Naive thymus-derived CD8-positive, alpha-beta T cell (primary cell): ENCODE measurements at regions of chrX and their contacts with region 1.

Region 1: GRCh38 chrX:124217304-124218251 is 114.9 kb upstream of the TEX13D start:
- DNase-seq: peak; percentile 24 to 80 (median 54)
- ATAC-seq: peak; percentile 94 to 96
- H3K4me3 Mint-ChIP-seq: peak overlapping the region; percentile 52 to 76 (median 69)
- H3K27ac Mint-ChIP-seq: peak overlapping the region; percentile 72 to 96 (median 92)
- H3K4me1 Mint-ChIP-seq: peaks cover 45 to 77% (median 70%) of the 10 kb centered on the region in 4 donors
- H3K27me3 Mint-ChIP-seq: no peaks in the 10 kb centered on the region

Region 2: GRCh38 chrX:124163220-124163619 is 54.4 kb before region 1 on chrX:
- POLR2A ChIA-PET with region 1: no interaction called
- DNase-seq: no peak
- ATAC-seq: no peak
- H3K4me3 Mint-ChIP-seq: no peak overlapping the region
- H3K27ac Mint-ChIP-seq: no peak overlapping the region
- H3K4me1 Mint-ChIP-seq: no peaks in the 10 kb centered on the region
- H3K27me3 Mint-ChIP-seq: no peaks in the 10 kb centered on the region

Region 3: DNA sequence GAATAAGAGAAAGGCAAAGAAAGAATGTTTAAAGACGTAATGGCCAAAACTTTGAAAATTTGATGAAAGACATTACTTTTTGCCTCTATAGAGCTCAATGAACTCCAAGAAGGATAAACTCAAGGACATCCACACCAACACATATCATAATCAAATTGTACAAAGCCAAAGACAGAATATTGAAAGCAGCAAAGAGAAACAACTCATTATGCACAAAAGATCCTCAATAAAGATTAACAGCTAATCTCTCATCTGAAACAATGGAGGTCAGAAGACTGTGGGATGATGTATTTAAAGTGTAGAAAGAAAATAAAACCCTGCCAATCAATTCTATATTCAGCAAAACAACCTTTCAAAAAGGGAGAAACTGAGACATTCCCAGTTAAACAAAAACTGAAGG is 14.3 kb before region 1 on chrX:
- POLR2A ChIA-PET with region 1: no interaction called
- DNase-seq: no peak
- ATAC-seq: no peak
- H3K4me3 Mint-ChIP-seq: no peak overlapping the region
- H3K27ac Mint-ChIP-seq: no peak overlapping the region
- H3K4me1 Mint-ChIP-seq: no peaks in the 10 kb centered on the region
- H3K27me3 Mint-ChIP-seq: no peaks in the 10 kb centered on the region

Region 4: GRCh38 chrX:124346117-124346876 is 128.7 kb after region 1 on chrX and contains the start of gene SH2D1A:
- POLR2A ChIA-PET with region 1: interaction called, 19 read pairs
- DNase-seq: peak in 5 of 10 donors; percentile 6 to 50 (median 17)
- ATAC-seq: peak; percentile 47 to 63
- H3K4me3 Mint-ChIP-seq: peak within 1 kb of the TSS; percentile 85 to 98 (median 96)
- H3K27ac Mint-ChIP-seq: peak within 1 kb of the TSS; percentile 86 to 97 (median 94)
- H3K4me1 Mint-ChIP-seq: peaks cover 13 to 53% (median 44%) of the 10 kb centered on the region in 4 donors
- H3K27me3 Mint-ChIP-seq: no peaks in the 10 kb centered on the region
- polyA plus RNA-seq, gene SH2D1A: 38.6 to 92.7 (median 44.1) TPM